Activated CD4-positive, alpha-beta T cell treated with anti-CD3 and anti-CD28 coated beads, Interleukin-2, amount 10 ng/mL, durations not matched to agents 24 days and 14 days (primary cell): ENCODE measurements at regions of chr1 and their contacts with region 1.

Region 1: DNA sequence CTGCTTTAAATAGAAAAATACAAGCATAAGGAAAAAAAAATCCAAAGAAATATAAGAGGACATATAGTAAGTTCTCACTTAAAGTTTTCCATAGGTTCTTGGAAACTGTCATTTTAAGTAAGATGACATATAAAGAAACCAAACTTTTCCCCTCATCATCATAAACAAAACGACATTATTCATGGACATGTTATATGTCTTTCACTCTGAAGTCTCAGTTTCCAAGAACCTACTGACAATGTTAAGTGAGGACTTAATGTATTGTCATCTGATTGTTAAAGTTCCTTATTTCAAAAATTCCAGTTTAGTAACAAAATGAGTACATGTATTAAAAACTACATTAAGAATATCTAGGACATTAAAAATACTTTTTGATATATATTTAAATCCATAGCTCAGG is 69.6 kb upstream of the GFI1 start:
- DNase-seq: no peak
- H3K4me3 Mint-ChIP-seq: no peak overlapping the region
- H3K27ac Mint-ChIP-seq: peak overlapping the region; percentile 71
- H3K4me1 Mint-ChIP-seq: peaks cover 37% of the 10 kb centered on the region
- H3K27me3 Mint-ChIP-seq: no peaks in the 10 kb centered on the region

Region 2: GRCh38 chr1:92446546-92446945 is 109.8 kb before region 1 on chr1:
- intact Hi-C with region 1: no loop called
- DNase-seq: no peak
- H3K4me3 Mint-ChIP-seq: no peak overlapping the region
- H3K27ac Mint-ChIP-seq: no peak overlapping the region
- H3K4me1 Mint-ChIP-seq: peaks cover 14% of the 10 kb centered on the region
- H3K27me3 Mint-ChIP-seq: peaks cover 12% of the 10 kb centered on the region

Region 3: DNA sequence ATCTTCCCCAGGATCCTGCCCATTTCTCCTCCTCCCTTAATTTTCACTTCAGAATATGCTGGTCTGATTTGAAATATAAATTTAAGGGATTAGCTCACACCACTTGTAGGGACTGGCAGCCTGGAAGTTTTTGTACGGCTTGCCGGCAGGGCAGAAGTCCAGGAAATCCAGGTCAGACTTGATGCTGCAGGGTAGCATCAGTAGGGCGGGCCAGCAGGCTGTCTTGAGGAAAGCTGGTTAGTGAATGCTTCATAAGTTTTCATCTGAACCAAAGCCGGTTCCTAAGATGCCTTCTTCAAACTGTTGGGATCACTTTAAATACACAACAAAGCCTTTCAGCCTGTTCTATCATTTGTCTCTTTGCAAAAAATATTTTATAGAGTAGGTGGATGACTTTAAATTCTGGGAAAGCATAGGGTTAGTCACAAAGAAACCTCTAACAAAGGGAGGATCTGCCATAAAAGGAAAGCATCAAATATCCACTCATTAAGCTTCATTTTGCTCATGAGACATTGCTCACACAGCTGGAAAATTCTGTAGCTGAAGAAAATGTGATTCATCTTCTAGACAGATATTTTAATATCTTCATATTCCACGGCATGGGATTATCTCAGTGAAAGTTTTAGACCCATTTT is 21.0 kb after region 1 on chr1:
- intact Hi-C with region 1: loop called (anchors 2 kb)
- DNase-seq: peak; percentile 72
- H3K4me3 Mint-ChIP-seq: peak overlapping the region; percentile 96
- H3K27ac Mint-ChIP-seq: peak overlapping the region; percentile 96
- H3K4me1 Mint-ChIP-seq: peaks cover 57% of the 10 kb centered on the region
- H3K27me3 Mint-ChIP-seq: no peaks in the 10 kb centered on the region